ENCODE measurements at regions of chr5 and their contacts with region 1.

Region 1: DNA sequence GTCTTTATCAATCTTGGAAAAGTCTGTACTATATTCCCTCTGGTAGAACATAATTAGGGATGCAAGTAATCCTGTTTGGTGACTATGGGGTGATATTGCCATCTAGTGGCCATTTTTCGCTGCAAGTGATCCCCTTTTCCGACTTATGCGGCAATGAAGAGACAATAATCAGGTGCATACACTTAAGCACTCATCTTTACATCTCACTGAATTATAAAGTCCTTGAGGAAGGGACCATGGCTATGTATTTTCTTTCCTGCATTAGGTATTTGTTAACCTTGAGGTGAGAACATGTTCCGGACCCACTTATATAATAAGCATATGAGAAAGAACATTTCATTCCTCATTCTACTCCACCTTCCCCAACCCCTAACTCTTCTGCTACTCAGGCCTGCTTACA is 19.6 kb upstream of the LIX1 start:
- DNase-seq: peak; percentile 47 to 65 (median 60)
- H3K4me3 ChIP-seq: no peak overlapping the region
- H3K4me3 Mint-ChIP-seq: no peak overlapping the region
- H3K27ac ChIP-seq: no peak overlapping the region
- H3K27ac Mint-ChIP-seq: no peak overlapping the region
- H3K4me1 ChIP-seq: peaks cover 0 to 2% of the 10 kb centered on the region in 2 donors
- H3K4me1 Mint-ChIP-seq: peaks cover 2% of the 10 kb centered on the region
- H3K27me3 ChIP-seq: no peaks in the 10 kb centered on the region
- H3K27me3 Mint-ChIP-seq: peaks cover 0 to 2% (median 0%) of the 10 kb centered on the region in 3 donors
- CTCF ChIP-seq: peak; percentile 91

Region 2: DNA sequence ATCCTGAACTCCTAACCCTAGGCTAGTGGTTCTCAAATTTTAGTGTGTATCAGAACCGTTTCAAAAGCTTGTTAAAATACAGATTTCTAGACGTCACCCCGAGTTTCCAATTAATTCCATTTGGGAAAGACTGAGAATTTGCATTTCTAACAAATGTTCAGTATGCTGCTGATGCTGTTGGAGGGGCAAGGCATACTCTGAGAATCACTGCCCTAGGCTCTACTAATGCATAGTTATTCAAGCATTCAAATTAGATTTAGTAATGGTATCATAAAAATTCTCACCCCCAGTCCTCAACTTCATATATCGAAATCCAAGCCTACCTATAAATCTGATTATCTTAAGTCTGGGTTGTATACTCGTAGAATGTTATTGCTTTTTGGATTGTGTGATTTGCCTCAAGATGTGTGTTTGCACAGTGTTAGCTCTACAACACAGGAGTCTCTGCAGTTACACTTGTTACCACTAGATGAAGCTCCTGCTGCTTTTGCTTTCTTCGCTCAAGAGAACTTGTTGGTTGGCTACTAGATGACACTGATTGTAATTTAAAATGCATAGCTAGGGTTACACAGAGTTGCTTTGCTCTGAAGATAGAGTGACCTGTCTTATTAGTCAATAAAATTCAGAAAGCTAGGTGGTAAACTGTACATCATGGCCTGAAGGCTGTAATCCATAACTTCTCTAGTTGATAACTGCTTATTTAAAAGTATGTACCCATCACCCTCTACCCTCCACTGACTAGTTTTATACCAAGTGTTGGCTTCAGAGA is 293.3 kb before region 1 on chr5:
- intact Hi-C with region 1: loop called (anchors 10 kb)
- DNase-seq: peak; percentile 38 to 71 (median 57)
- H3K4me3 ChIP-seq: no peak overlapping the region
- H3K4me3 Mint-ChIP-seq: no peak overlapping the region
- H3K27ac ChIP-seq: no peak overlapping the region
- H3K27ac Mint-ChIP-seq: no peak overlapping the region
- H3K4me1 ChIP-seq: no peaks in the 10 kb centered on the region
- H3K4me1 Mint-ChIP-seq: peaks cover 1% of the 10 kb centered on the region
- H3K27me3 ChIP-seq: no peaks in the 10 kb centered on the region
- H3K27me3 Mint-ChIP-seq: peaks cover 1 to 8% (median 2%) of the 10 kb centered on the region in 3 donors
- CTCF ChIP-seq: peak; percentile 93

Region 3: GRCh38 chr5:96876292-96876850 is 285.7 kb before region 1 on chr5 and contains the start of gene ERAP2:
- intact Hi-C with region 1: loop called in 1 of 2 experiments (anchors 10 kb)
- DNase-seq: peak; percentile 17 to 57 (median 36)
- H3K4me3 ChIP-seq: peak within 1 kb of the TSS; percentile 86 to 100 (median 93)
- H3K4me3 Mint-ChIP-seq: peak within 1 kb of the TSS; percentile 88 to 97
- H3K27ac ChIP-seq: peak within 1 kb of the TSS; percentile 19 to 84
- H3K27ac Mint-ChIP-seq: peak within 1 kb of the TSS; percentile 89 to 96 (median 91)
- H3K4me1 ChIP-seq: peaks cover 29 to 39% of the 10 kb centered on the region in 2 donors
- H3K4me1 Mint-ChIP-seq: peaks cover 35% of the 10 kb centered on the region
- H3K27me3 ChIP-seq: no peaks in the 10 kb centered on the region
- H3K27me3 Mint-ChIP-seq: peaks cover 0 to 4% (median 0%) of the 10 kb centered on the region in 3 donors
- CTCF ChIP-seq: no peak
- polyA plus RNA-seq, gene ERAP2: 3.0 to 20.4 (median 3.4) TPM

Region 4: DNA sequence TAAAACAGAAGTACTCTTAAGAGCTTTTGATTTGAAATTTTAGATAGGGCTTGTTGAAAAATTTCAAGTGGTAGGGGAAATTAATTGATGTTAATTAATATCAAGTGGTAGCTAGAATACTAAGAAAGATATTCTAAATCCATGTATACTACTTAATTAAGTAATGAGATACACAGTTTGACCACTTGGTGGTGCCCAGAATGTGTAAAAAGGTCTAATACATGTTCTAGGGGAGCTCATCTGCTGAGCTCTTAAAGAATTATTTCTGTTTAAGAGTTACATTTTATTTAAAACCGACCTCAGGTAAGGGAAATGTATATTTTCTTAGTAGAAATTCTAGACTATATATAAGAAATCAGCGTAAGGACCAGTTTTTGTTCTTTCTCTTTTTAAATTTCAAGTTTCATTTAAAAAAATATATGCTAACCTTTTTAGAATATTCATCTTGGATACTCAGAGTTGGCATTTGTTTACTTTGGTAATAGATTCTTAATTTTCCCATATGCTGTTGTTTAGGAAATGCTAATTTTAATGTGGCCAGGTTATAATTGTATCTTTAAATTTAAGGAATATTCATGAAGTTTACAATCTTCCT is 164.7 kb before region 1 on chr5:
- intact Hi-C with region 1: loop called in 1 of 2 experiments (anchors 10 kb)
- DNase-seq: peak; percentile 24 to 46 (median 36)
- H3K4me3 ChIP-seq: no peak overlapping the region
- H3K4me3 Mint-ChIP-seq: no peak overlapping the region
- H3K27ac ChIP-seq: no peak overlapping the region
- H3K27ac Mint-ChIP-seq: no peak overlapping the region
- H3K4me1 ChIP-seq: no peaks in the 10 kb centered on the region
- H3K4me1 Mint-ChIP-seq: peaks cover 3% of the 10 kb centered on the region
- H3K27me3 ChIP-seq: no peaks in the 10 kb centered on the region
- H3K27me3 Mint-ChIP-seq: peaks cover 0 to 3% (median 0%) of the 10 kb centered on the region in 3 donors
- CTCF ChIP-seq: peak; percentile 71

Measured in CD14-positive monocyte (primary cell).